ENCODE measurements at regions of chr13 and their contacts with region 1.

Region 1: DNA sequence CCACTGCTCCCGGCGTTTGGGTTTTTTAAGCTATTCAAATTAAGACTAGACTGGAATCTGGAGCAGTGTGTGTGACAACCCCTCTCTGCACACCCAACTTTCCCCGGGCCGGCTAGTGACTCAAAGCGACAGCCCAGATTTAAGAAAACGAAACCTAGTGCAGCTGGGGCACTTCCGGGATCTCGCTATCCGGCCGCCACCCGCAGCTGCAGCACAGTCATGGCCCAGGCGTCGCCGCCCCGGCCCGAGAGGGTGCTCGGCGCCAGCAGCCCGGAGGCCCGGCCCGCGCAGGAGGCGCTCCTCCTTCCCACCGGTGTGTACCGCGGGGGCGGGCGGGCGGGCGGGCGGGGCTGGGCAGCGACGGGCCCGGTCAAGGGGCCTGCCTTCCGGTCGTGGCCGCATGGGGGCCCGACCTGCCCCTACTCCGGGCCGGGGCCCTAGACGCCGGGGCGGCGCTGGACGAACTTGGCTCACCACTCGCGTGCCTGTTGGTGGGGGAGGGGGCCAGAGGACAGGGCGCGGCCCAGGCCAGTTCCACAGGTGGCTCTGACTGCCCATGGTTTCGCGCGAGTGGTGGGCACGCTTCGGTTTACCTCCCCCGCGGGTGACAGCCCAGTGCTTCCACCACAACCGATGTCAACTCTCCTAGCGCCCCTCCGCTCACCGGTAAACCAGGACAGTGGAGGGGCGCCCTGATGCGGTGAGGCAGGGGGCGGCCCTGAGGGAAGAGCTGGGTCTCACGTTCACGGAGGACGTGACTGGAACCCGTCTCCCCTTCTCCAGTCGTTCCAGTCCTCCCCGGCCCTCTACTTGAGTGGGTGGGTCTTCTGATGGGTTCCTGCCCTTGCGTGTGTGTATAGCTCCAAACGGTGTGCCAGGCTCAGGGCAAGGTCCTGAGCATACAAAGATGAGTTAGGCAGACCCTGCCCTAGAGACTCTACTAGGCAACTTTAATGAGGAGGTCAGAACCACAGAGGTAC is at the start of gene PHF11:
- DNase-seq: peak; percentile 66 to 86 (median 83)
- ATAC-seq: peak; percentile 90
- H3K4me3 ChIP-seq: peak within 1 kb of the TSS; percentile 77
- H3K4me3 Mint-ChIP-seq: peak within 1 kb of the TSS; percentile 91 to 99 (median 97)
- H3K27ac ChIP-seq: peak within 1 kb of the TSS; percentile 90
- H3K27ac Mint-ChIP-seq: peak within 1 kb of the TSS; percentile 81 to 100 (median 99)
- H3K4me1 ChIP-seq: peaks cover 25 to 34% of the 10 kb centered on the region in 2 donors
- H3K4me1 Mint-ChIP-seq: peaks cover 34 to 59% (median 53%) of the 10 kb centered on the region in 7 donors
- H3K27me3 ChIP-seq: no peaks in the 10 kb centered on the region
- H3K27me3 Mint-ChIP-seq: no peaks in the 10 kb centered on the region
- total RNA-seq, gene PHF11: 96.0 to 132 (median 126) TPM

Region 2: DNA sequence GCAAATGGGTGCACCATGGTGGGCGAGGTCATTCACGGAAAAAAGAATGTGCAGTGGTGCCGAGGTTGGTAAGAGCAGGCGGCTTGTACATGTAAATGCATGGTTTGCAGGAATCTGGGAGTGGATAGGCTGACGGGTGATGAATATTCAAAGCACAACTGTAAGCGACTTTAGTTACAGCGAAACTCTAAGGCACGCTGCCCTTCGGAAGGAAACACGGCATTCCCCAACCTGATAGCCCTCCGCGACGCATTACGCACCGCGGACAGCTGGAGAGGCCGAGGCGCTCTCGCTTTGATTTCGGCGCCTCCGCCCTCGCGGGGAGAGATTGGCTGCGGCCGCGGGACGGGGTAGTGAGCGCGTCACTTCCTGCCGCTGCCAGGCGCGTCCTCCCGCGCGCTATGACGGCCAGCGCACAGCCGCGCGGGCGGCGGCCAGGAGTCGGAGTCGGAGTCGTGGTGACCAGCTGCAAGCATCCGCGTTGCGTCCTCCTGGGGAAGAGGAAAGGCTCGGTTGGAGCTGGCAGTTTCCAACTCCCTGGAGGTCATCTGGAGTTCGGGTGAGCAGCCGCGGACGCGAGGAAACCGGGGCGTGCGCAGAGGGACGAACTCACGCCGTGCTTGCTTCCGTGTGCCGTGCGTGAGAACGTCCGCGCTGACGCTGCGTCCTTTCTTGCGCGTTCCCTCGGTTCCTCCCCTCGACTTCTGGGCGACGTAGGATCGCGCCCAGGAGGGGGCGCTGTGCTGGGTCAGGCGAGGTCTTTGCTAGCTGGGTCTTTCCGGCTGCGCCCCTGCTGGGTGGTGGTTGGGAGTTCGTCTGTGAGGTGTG is 1458.5 kb before region 1 on chr13 and contains the start of gene NUDT15:
- CTCF ChIA-PET with region 1: no interaction called
- POLR2A ChIA-PET with region 1: no interaction called
- intact Hi-C with region 1: loop called in 1 of 2 experiments (anchors 10 kb)
- DNase-seq: peak; percentile 93 to 98 (median 97)
- ATAC-seq: peak; percentile 96
- H3K4me3 ChIP-seq: peak within 1 kb of the TSS; percentile 90
- H3K4me3 Mint-ChIP-seq: peak within 1 kb of the TSS; percentile 82 to 98 (median 95)
- H3K27ac ChIP-seq: peak within 1 kb of the TSS; percentile 91
- H3K27ac Mint-ChIP-seq: peak within 1 kb of the TSS; percentile 96 to 100 (median 97)
- H3K4me1 ChIP-seq: peaks cover 14 to 15% of the 10 kb centered on the region in 2 donors
- H3K4me1 Mint-ChIP-seq: peaks cover 15 to 52% (median 40%) of the 10 kb centered on the region in 7 donors
- H3K27me3 ChIP-seq: no peaks in the 10 kb centered on the region
- H3K27me3 Mint-ChIP-seq: no peaks in the 10 kb centered on the region
- total RNA-seq, gene NUDT15: 4.3 to 13.6 (median 8.7) TPM

Region 3: GRCh38 chr13:49247643-49248621 is 248.1 kb before region 1 on chr13 and contains the start of gene CDADC1:
- CTCF ChIA-PET with region 1: no interaction called
- POLR2A ChIA-PET with region 1: no interaction called
- intact Hi-C with region 1: loop called in 1 of 2 experiments (anchors 1 kb)
- DNase-seq: peak; percentile 44 to 93 (median 54)
- ATAC-seq: peak; percentile 90
- H3K4me3 ChIP-seq: peak within 1 kb of the TSS; percentile 93
- H3K4me3 Mint-ChIP-seq: peak within 1 kb of the TSS; percentile 94 to 99 (median 98)
- H3K27ac ChIP-seq: peak within 1 kb of the TSS; percentile 75
- H3K27ac Mint-ChIP-seq: peak within 1 kb of the TSS; percentile 92 to 97 (median 95)
- H3K4me1 ChIP-seq: peaks cover 1 to 3% of the 10 kb centered on the region in 2 donors
- H3K4me1 Mint-ChIP-seq: peaks cover 16 to 59% (median 53%) of the 10 kb centered on the region in 7 donors
- H3K27me3 ChIP-seq: no peaks in the 10 kb centered on the region
- H3K27me3 Mint-ChIP-seq: peaks cover 0 to 25% (median 0%) of the 10 kb centered on the region in 5 donors
- total RNA-seq, gene CDADC1: 10.7 to 21.3 (median 14.5) TPM

Region 4: DNA sequence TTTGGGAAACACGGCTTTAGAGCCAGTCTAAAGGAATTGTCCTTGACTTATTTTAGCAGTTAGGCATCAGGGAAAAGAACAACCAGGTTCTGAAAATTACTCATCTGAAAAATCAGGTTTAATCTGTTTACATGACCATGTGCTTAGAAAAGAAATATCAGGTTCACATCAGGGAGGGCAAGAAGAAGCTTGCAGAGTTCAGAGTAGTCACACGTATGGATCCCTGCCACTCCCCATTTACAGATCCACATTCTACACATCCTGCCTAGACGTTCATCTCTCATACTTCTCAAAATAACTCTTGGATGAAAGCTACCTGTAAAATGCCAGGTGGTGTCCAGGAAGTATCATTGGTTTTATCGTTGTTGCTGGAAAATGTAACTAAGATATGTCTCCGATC is 14.3 kb before region 1 on chr13:
- CTCF ChIA-PET with region 1: interaction called, 3 read pairs
- POLR2A ChIA-PET with region 1: interaction called, 9 read pairs
- intact Hi-C with region 1: loop called in 1 of 2 experiments (anchors 2 kb)
- DNase-seq: no peak
- ATAC-seq: no peak
- H3K4me3 ChIP-seq: no peak overlapping the region
- H3K4me3 Mint-ChIP-seq: no peak overlapping the region
- H3K27ac ChIP-seq: no peak overlapping the region
- H3K27ac Mint-ChIP-seq: peak overlapping the region in 4 of 9 donors; percentile 6 to 76 (median 13)
- H3K4me1 ChIP-seq: no peaks in the 10 kb centered on the region
- H3K4me1 Mint-ChIP-seq: peaks cover 0 to 4% (median 0%) of the 10 kb centered on the region in 7 donors
- H3K27me3 ChIP-seq: no peaks in the 10 kb centered on the region
- H3K27me3 Mint-ChIP-seq: no peaks in the 10 kb centered on the region

Region 5: GRCh38 chr13:49585220-49586157 is 89.4 kb after region 1 on chr13 and contains the start of gene RCBTB1:
- CTCF ChIA-PET with region 1: no interaction called
- POLR2A ChIA-PET with region 1: interaction called, 10 read pairs
- intact Hi-C with region 1: loop called (anchors 1 to 2 kb)
- DNase-seq: peak; percentile 47 to 74 (median 66)
- ATAC-seq: peak; percentile 97
- H3K4me3 ChIP-seq: peak within 1 kb of the TSS; percentile 56
- H3K4me3 Mint-ChIP-seq: peak within 1 kb of the TSS; percentile 83 to 100 (median 92)
- H3K27ac ChIP-seq: peak within 1 kb of the TSS; percentile 82
- H3K27ac Mint-ChIP-seq: peak within 1 kb of the TSS; percentile 86 to 96 (median 94)
- H3K4me1 ChIP-seq: peaks cover 10 to 16% of the 10 kb centered on the region in 2 donors
- H3K4me1 Mint-ChIP-seq: peaks cover 32 to 53% (median 50%) of the 10 kb centered on the region in 7 donors
- H3K27me3 ChIP-seq: no peaks in the 10 kb centered on the region
- H3K27me3 Mint-ChIP-seq: peaks cover 0 to 3% (median 0%) of the 10 kb centered on the region in 5 donors
- total RNA-seq, gene RCBTB1: 16.3 to 22.2 (median 20.4) TPM

Region 6: DNA sequence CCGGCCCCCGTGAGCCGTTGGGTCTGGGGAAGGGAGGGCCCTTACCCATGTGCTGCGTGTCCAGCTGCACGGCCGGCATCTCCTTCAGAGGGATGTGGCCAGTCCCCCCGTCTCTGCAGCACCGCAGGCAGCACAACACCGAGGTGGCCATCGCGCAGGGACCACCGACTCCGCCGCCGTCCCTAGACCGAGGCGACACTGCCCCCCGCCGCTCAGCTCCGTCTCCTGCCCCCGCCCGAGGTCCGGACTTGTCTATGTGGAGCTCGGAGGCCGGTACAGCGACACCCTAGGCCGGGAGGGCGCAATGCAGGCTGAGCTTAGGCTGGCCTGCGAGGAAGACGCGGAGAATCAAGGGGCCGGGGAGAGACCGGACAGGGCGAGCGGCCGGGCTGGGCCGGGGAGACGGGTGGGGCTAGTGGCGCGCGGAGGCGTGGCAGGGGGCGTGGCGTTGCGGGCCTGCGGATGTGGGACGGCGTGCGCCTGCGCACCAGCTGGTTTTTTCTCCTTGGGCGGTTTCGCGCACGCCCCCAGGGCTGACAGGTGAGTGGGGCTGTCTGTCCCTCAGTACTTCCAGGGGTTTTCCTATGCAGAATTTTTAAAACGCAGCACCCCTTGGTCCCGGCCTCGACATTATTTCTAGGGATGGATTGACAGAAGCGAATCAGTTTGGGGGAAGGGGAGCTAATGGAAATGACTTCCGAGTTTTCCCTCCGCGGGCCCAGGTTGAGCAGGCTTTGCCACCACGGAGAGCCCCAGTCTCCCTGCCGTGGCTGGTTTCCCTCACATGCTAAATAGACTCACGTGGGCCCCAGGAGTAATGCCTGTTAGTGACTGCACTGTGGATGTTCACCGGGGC is 440.2 kb after region 1 on chr13 and contains the start of gene SPRYD7:
- CTCF ChIA-PET with region 1: no interaction called
- POLR2A ChIA-PET with region 1: no interaction called
- intact Hi-C with region 1: loop called in 1 of 2 experiments (anchors 5 kb)
- DNase-seq: peak; percentile 82 to 99 (median 90)
- ATAC-seq: peak; percentile 98
- H3K4me3 ChIP-seq: peak within 1 kb of the TSS; percentile 99
- H3K4me3 Mint-ChIP-seq: peak within 1 kb of the TSS; percentile 86 to 99 (median 96)
- H3K27ac ChIP-seq: peak within 1 kb of the TSS; percentile 69
- H3K27ac Mint-ChIP-seq: peak within 1 kb of the TSS; percentile 74 to 95 (median 86)
- H3K4me1 ChIP-seq: peaks cover 10 to 14% of the 10 kb centered on the region in 2 donors
- H3K4me1 Mint-ChIP-seq: peaks cover 12 to 28% (median 15%) of the 10 kb centered on the region in 7 donors
- H3K27me3 ChIP-seq: no peaks in the 10 kb centered on the region
- H3K27me3 Mint-ChIP-seq: peaks cover 0 to 33% (median 0%) of the 10 kb centered on the region in 5 donors
- total RNA-seq, gene SPRYD7: 1.7 to 3.1 (median 2.3) TPM